Sigmoid colon (tissue), 7 donors: ENCODE measurements at regions of chr14 and their contacts with region 1.

Region 1: GRCh38 chr14:105414456-105415371 is 4.9 kb upstream of the MTA1 start:
- DNase-seq: peak; percentile 90
- H3K4me3 ChIP-seq: peak overlapping the region; percentile 20 to 59 (median 56)
- H3K27ac ChIP-seq: peak overlapping the region; percentile 77 to 82 (median 80)
- H3K4me1 ChIP-seq: peaks cover 0 to 47% (median 37%) of the 10 kb centered on the region in 4 donors
- H3K27me3 ChIP-seq: peaks cover 10 to 34% (median 24%) of the 10 kb centered on the region in 3 donors
- CTCF ChIP-seq: peak; percentile 11 to 86 (median 46)
- EP300 ChIP-seq: no peak
- POLR2A ChIP-seq: no peak

Region 2: GRCh38 chr14:105375635-105376057 is 39.1 kb before region 1 on chr14:
- intact Hi-C with region 1: loop called (anchors 5 kb)
- DNase-seq: no peak
- H3K4me3 ChIP-seq: no peak overlapping the region
- H3K27ac ChIP-seq: no peak overlapping the region
- H3K4me1 ChIP-seq: peaks cover 0 to 4% (median 0%) of the 10 kb centered on the region in 4 donors
- H3K27me3 ChIP-seq: no peaks in the 10 kb centered on the region
- CTCF ChIP-seq: no peak
- EP300 ChIP-seq: no peak
- POLR2A ChIP-seq: no peak

Region 3: DNA sequence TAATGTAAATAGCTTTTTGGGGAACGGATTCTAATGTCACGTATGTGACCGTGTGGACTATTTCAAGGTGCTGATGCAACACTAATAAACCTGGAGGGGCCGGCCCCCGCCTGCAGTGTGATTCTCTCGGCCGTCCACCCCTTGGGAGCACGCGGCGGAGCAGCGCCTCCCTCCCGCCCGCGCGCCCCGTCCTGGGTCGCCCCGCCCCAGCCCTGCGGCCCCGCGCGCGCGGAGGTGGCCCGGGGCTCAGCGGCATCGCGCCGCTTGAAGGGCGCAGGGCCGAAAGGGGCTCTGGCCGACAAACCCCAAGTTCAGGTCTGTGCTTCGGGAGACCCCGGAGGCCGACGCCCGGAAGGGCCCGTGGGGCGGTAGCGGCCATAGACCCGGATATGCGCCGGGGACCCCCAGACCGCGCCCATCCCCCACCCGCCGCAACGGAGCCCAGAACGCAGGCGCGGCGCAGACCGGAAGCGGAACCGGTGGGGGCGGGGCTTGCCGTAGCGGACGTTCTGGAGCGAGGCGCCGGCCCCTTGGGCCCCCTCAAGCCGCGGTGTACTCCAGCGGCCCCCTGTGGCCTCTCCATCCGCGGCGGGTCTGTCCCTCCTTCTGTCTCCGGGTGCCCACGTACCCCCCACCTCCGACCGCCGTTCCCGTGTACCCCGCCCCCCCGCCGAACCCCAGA is 16.5 kb before region 1 on chr14 and contains the start of gene TEX22:
- intact Hi-C with region 1: loop called (anchors 1 kb)
- DNase-seq: peak; percentile 94
- H3K4me3 ChIP-seq: peak within 1 kb of the TSS; percentile 76 to 93 (median 89)
- H3K27ac ChIP-seq: peak within 1 kb of the TSS; percentile 80 to 86 (median 84)
- H3K4me1 ChIP-seq: peaks cover 0 to 23% (median 18%) of the 10 kb centered on the region in 4 donors
- H3K27me3 ChIP-seq: no peaks in the 10 kb centered on the region
- CTCF ChIP-seq: peak in 1 of 4 experiments; percentile 10
- EP300 ChIP-seq: peak in 1 of 4 donors; percentile 17
- POLR2A ChIP-seq: peak; percentile 65 to 69
- total RNA-seq, gene TEX22: not detected

Region 4: DNA sequence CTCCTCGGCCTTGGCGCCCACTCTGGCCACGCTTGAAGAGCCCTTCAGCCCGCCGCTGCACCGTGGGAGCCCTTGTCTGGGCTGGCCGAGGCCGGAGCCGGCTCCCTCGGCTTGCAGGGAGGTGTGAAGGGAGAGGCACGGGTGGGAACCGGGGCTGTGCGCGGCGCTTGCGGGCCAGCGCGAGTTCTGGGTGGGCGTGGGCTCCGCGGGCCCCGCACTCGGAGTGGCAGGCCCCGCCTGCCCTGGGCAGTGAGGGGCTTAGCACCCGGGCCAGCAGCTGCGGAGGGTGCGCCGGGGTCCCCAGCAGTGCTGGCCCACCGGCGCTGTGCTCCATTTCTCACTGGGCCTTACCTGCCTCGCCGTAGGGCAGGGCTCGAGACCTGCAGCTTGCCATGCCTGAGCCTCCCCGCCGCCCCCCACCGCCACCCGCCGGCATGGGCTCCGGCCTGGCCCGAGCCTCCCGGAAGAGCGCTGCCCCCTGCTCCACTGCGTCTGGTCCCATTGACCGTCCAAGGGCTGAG is 133.0 kb after region 1 on chr14:
- intact Hi-C with region 1: no loop called
- DNase-seq: no peak
- H3K4me3 ChIP-seq: no peak overlapping the region
- H3K27ac ChIP-seq: no peak overlapping the region
- H3K4me1 ChIP-seq: no peaks in the 10 kb centered on the region
- H3K27me3 ChIP-seq: peaks cover 0 to 3% (median 0%) of the 10 kb centered on the region in 3 donors
- CTCF ChIP-seq: no peak
- EP300 ChIP-seq: no peak
- POLR2A ChIP-seq: no peak